Left colon (tissue), 2 donors: ENCODE measurements at regions of chr9 and their contacts with region 1.

Region 1: DNA sequence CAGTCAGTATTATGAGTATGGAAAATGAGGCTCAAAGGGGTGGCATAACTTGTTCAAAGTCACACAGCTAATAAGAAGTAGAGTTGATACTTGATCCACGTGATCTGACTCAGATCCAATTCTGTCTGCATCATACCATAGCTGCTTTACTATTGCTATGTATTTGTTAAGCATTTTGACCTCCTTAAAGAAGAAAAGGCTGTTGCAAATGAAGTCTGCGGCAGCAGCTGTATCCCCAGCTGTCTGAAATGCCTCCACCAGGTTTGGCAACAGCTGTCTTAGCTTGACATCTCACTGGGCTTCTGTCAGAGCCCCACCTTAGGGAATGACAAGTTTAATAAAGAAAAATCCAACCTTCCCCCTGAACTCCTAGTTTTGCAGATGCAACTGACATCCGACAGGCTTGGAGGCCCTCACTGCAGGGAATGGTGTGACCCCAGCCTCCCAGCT is 75.6 kb upstream of the SLC44A1 start:
- DNase-seq: no peak
- ATAC-seq: no peak

Region 2: GRCh38 chr9:105233873-105234272 is 65.0 kb after region 1 on chr9:
- intact Hi-C with region 1: loop called in 1 of 2 experiments (anchors 10 kb)
- DNase-seq: no peak
- ATAC-seq: no peak